CD4-positive, alpha-beta T cell (primary cell): ENCODE measurements at regions of chr19 and their contacts with region 1.

Region 1: DNA sequence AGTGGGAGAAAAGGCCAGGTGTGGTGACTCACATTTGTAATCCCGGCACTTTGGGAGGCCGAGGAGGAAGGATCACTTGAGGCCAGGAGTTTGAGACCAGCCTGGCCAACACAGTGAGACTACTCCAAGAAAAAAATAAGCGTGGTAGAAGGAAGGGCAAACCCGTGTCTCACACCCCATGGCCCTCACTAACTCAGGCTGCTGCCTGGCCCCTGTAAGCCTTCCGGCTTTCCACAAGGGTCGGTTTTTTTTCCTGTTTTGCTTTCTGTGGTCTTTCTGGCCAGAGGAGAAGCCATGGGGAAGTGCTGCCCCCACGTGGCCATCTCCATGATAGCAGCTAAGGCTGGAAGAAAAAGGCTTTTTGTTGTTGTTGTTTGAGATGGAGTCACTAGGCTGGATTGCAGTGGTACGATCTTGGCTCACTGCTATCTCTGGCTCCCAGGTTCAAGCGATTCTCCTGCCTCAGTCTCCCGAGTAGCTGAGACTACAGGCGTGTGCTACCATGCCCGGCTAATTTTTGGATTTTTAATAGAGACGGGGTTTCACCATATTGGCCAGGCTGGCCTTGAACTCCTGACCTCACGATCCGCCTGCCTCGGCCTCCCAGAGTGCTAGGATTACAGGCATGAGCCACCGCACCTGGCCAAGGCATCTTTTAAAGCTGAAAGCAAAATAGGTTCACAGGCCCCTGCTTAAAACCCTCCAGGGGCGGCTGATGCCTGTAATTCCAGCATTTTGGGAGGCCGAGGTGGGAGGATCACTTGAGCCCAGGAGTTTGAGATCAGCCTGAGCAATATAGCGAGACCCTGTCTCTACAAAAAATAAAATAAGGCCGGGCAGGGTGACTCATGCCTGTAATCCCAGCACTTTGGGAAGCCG is 7.5 kb upstream of the ARHGEF18 start:
- DNase-seq: peak; percentile 68 to 94 (median 88)
- ATAC-seq: peak; percentile 19
- H3K4me3 ChIP-seq: no peak overlapping the region
- H3K4me3 Mint-ChIP-seq: peak overlapping the region; percentile 74
- H3K27ac ChIP-seq: no peak overlapping the region
- H3K27ac Mint-ChIP-seq: peak overlapping the region; percentile 92
- H3K4me1 ChIP-seq: peaks cover 67% of the 10 kb centered on the region
- H3K4me1 Mint-ChIP-seq: peaks cover 62% of the 10 kb centered on the region
- H3K27me3 ChIP-seq: no peaks in the 10 kb centered on the region
- H3K27me3 Mint-ChIP-seq: no peaks in the 10 kb centered on the region
- CTCF ChIP-seq: peak; percentile 84

Region 2: GRCh38 chr19:7069042-7069903 is 271.9 kb before region 1 on chr19 and contains the start of gene ZNF557:
- CTCF ChIA-PET with region 1: no interaction called
- POLR2A ChIA-PET with region 1: interaction called, 10 read pairs
- intact Hi-C with region 1: no loop called
- DNase-seq: peak; percentile 98 to 100 (median 99)
- ATAC-seq: peak; percentile 95
- H3K4me3 ChIP-seq: peak within 1 kb of the TSS; percentile 88
- H3K4me3 Mint-ChIP-seq: peak within 1 kb of the TSS; percentile 96
- H3K27ac ChIP-seq: peak within 1 kb of the TSS; percentile 85 to 89
- H3K27ac Mint-ChIP-seq: peak within 1 kb of the TSS; percentile 91
- H3K4me1 ChIP-seq: peaks cover 21% of the 10 kb centered on the region
- H3K4me1 Mint-ChIP-seq: peaks cover 23% of the 10 kb centered on the region
- H3K27me3 ChIP-seq: no peaks in the 10 kb centered on the region
- H3K27me3 Mint-ChIP-seq: no peaks in the 10 kb centered on the region
- CTCF ChIP-seq: no peak
- total RNA-seq, gene ZNF557: 15.8 to 17.4 TPM

Region 3: GRCh38 chr19:7145494-7146485 is 195.4 kb before region 1 on chr19:
- CTCF ChIA-PET with region 1: interaction called, 10 read pairs
- POLR2A ChIA-PET with region 1: interaction called, 6 read pairs
- intact Hi-C with region 1: loop called (anchors 1 kb)
- DNase-seq: no peak
- ATAC-seq: no peak
- H3K4me3 ChIP-seq: no peak overlapping the region
- H3K4me3 Mint-ChIP-seq: no peak overlapping the region
- H3K27ac ChIP-seq: no peak overlapping the region
- H3K27ac Mint-ChIP-seq: no peak overlapping the region
- H3K4me1 ChIP-seq: no peaks in the 10 kb centered on the region
- H3K4me1 Mint-ChIP-seq: no peaks in the 10 kb centered on the region
- H3K27me3 ChIP-seq: no peaks in the 10 kb centered on the region
- H3K27me3 Mint-ChIP-seq: no peaks in the 10 kb centered on the region
- CTCF ChIP-seq: no peak

Region 4: DNA sequence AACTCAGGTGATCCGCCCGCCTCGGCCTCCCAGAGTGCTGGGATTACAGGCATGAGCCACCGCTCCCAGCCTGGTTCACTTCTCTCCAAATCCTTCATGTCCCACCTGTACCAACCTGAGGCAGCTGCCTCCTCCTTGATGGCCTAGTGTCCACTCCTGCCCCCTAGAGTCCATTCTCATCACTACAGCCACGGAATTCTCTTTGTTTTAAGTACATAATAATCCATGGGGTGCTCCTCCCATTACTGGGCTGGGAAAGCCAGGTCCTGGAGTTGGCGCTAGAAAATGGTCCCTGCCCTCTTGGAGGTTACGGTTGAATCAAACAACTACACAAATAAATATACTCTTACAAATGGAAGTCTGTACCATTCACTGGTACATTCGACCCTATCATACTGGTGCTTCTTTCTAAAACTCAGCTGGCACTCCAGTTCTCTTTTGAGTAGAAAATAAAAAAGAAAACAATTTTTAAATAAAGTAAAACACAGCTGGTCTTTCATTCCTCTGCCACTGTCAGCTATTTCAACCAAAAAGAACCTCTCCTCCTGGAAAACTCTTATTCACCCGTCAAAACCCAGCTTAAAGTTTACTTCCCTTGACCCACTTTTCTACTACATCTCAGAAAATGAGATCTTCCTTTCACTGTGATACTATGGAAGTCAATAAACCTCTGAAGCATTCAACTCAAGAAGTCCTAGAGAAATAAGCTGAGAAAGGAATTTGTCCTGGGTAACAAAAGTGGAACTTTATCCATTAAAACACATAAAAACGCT is 14.9 kb before region 1 on chr19:
- CTCF ChIA-PET with region 1: interaction called, 10 read pairs
- POLR2A ChIA-PET with region 1: interaction called, 3 read pairs
- intact Hi-C with region 1: loop called in 1 of 2 experiments (anchors 1 kb)
- DNase-seq: peak in 4 of 14 experiments; percentile 50 to 67 (median 56)
- ATAC-seq: no peak
- H3K4me3 ChIP-seq: no peak overlapping the region
- H3K4me3 Mint-ChIP-seq: no peak overlapping the region
- H3K27ac ChIP-seq: no peak overlapping the region
- H3K27ac Mint-ChIP-seq: no peak overlapping the region
- H3K4me1 ChIP-seq: no peaks in the 10 kb centered on the region
- H3K4me1 Mint-ChIP-seq: no peaks in the 10 kb centered on the region
- H3K27me3 ChIP-seq: no peaks in the 10 kb centered on the region
- H3K27me3 Mint-ChIP-seq: no peaks in the 10 kb centered on the region
- CTCF ChIP-seq: peak; percentile 43

Region 5: DNA sequence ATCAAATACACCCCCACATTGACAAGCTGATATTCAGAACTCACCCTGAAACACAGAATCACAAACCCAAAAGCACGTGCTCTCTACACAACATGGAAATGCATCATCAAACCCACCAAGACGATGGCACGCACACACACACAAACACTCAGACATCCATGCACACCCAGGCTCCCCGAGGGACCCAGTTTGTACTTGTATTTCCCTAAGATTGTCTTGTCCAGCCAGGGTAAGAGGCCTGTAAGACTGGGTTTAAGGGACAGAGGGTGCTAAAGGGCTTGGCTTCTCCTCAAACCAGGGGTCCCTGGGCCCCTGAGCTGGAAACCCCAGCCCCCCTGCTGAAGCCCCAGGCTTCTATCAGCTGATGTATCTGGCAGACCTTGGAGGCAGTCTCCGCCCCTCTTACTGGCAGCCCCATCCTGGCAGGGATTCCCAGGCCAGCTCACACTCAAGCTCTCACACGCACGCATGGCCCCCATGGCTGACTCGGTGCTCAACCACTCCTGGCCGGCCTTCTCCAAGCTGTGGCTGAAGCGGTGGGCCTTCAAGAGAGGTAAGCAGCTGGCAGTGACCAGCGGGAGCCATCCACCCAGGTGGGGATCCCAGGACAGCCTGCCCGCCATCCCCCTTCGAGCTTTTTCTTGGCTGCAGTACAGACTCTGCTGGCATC is 14.1 kb after region 1 on chr19:
- CTCF ChIA-PET with region 1: interaction called, 18 read pairs
- POLR2A ChIA-PET with region 1: interaction called, 36 read pairs
- intact Hi-C with region 1: no loop called
- DNase-seq: no peak
- ATAC-seq: no peak
- H3K4me3 ChIP-seq: no peak overlapping the region
- H3K4me3 Mint-ChIP-seq: peak overlapping the region; percentile 66
- H3K27ac ChIP-seq: peak overlapping the region in 1 of 2 donors; percentile 9
- H3K27ac Mint-ChIP-seq: peak overlapping the region; percentile 92
- H3K4me1 ChIP-seq: peaks cover 80% of the 10 kb centered on the region
- H3K4me1 Mint-ChIP-seq: peaks cover 74% of the 10 kb centered on the region
- H3K27me3 ChIP-seq: no peaks in the 10 kb centered on the region
- H3K27me3 Mint-ChIP-seq: no peaks in the 10 kb centered on the region
- CTCF ChIP-seq: no peak

Region 6: GRCh38 chr19:7360393-7360984 is 19.3 kb after region 1 on chr19:
- CTCF ChIA-PET with region 1: interaction called, 18 read pairs
- POLR2A ChIA-PET with region 1: interaction called, 36 read pairs
- intact Hi-C with region 1: no loop called
- DNase-seq: no peak
- ATAC-seq: no peak
- H3K4me3 ChIP-seq: no peak overlapping the region
- H3K4me3 Mint-ChIP-seq: no peak overlapping the region
- H3K27ac ChIP-seq: peak overlapping the region in 1 of 2 donors; percentile 15
- H3K27ac Mint-ChIP-seq: peak overlapping the region; percentile 76
- H3K4me1 ChIP-seq: peaks cover 64% of the 10 kb centered on the region
- H3K4me1 Mint-ChIP-seq: peaks cover 64% of the 10 kb centered on the region
- H3K27me3 ChIP-seq: no peaks in the 10 kb centered on the region
- H3K27me3 Mint-ChIP-seq: no peaks in the 10 kb centered on the region
- CTCF ChIP-seq: no peak